ENCODE measurements at regions of chr15 and their contacts with region 1.

Region 1: DNA sequence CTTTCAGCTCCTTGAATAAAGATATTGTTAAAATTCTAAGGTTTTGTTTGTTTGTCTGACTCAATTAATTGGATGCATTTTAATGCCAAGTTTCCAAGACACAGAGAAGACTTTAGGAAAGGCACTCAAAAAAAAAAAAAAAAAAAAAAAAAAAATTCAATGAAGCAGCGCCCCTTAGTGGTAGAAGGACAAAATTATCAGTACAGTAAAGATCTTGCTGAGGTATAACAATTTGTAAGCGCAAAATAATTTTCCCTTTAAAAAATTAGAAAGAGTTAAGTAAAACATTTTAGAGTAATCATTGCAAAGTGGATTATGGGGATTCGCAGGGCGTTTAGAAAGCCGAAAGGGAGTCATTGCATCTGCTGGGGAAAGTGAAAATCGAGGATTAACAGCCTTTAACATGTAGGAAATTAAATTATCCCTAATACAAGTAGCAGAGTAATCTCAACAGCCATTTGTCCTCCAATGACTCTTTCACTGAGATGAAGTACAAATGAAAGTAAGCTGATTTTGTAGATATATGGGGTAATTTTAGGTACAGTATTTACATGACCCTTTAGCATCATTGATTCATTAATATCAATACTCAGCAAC is 5.8 kb upstream of the DIS3L start:
- DNase-seq: peak in 2 of 9 experiments; percentile 48 to 65
- ATAC-seq: peak; percentile 44
- H3K4me3 ChIP-seq: no peak overlapping the region
- H3K4me3 Mint-ChIP-seq: no peak overlapping the region
- H3K27ac ChIP-seq: no peak overlapping the region
- H3K27ac Mint-ChIP-seq: no peak overlapping the region
- H3K4me1 ChIP-seq: peaks cover 19% of the 10 kb centered on the region
- H3K4me1 Mint-ChIP-seq: peaks cover 23% of the 10 kb centered on the region
- H3K27me3 ChIP-seq: no peaks in the 10 kb centered on the region
- H3K27me3 Mint-ChIP-seq: no peaks in the 10 kb centered on the region
- CTCF ChIP-seq: peak; percentile 96

Region 2: GRCh38 chr15:65595960-65596359 is 691.6 kb before region 1 on chr15:
- CTCF ChIA-PET with region 1: interaction called, 5 read pairs
- POLR2A ChIA-PET with region 1: no interaction called
- intact Hi-C with region 1: loop called in 1 of 2 experiments (anchors 5 kb)
- DNase-seq: peak in 4 of 9 experiments; percentile 15 to 56 (median 36)
- ATAC-seq: no peak
- H3K4me3 ChIP-seq: no peak overlapping the region
- H3K4me3 Mint-ChIP-seq: no peak overlapping the region
- H3K27ac ChIP-seq: no peak overlapping the region
- H3K27ac Mint-ChIP-seq: no peak overlapping the region
- H3K4me1 ChIP-seq: no peaks in the 10 kb centered on the region
- H3K4me1 Mint-ChIP-seq: no peaks in the 10 kb centered on the region
- H3K27me3 ChIP-seq: no peaks in the 10 kb centered on the region
- H3K27me3 Mint-ChIP-seq: no peaks in the 10 kb centered on the region
- CTCF ChIP-seq: peak; percentile 36

Region 3: DNA sequence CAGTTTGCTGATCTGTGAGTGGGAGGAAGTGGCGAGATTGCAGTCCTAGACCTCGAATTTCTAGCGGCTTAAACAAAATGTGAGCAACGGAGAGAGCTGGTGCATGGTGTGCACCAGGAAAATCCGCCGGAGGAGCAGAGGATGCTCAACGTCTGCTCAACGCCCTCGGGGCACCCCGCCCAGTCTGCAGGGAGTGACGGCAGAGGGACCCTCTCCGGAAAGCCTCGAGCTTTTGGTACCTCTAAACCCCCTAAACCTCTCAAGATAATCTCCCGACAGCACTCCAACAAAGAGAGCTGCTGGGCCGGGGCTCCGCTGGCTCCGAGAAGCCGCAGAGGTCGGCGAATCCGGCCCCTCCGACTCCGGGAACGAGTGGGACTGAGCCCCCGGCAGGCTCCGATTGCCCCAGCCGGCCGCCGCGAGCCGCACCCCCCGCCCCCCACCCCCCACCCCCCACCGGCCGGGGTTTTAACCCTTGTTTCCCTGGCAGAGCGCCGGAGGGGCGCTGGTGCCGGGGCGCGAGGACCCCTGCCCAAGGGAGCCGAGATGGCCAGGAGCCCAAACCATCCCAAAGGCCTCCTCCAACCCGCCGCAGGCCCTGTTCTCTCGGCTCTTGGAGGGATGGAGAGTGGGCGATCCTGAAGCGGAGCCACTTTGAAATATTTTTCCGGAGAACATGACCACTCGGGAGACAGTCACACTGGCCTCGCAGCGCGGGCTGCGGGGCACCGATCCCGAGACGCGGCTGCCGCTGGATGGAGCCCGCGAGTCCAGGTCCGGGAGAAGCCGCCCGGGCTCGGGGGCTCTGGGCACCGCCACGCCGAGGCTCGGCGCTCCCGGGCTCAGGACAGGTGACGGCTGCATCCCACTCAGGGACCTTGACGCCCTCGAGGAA is 35.5 kb before region 1 on chr15:
- CTCF ChIA-PET with region 1: interaction called, 3 read pairs
- POLR2A ChIA-PET with region 1: interaction called, 3 read pairs
- intact Hi-C with region 1: loop called (anchors 2 kb)
- DNase-seq: peak; percentile 5 to 65 (median 42)
- ATAC-seq: peak; percentile 56
- H3K4me3 ChIP-seq: peak overlapping the region; percentile 48 to 69
- H3K4me3 Mint-ChIP-seq: peak overlapping the region; percentile 75
- H3K27ac ChIP-seq: no peak overlapping the region
- H3K27ac Mint-ChIP-seq: no peak overlapping the region
- H3K4me1 ChIP-seq: peaks cover 18% of the 10 kb centered on the region
- H3K4me1 Mint-ChIP-seq: peaks cover 22% of the 10 kb centered on the region
- H3K27me3 ChIP-seq: peaks cover 27 to 40% of the 10 kb centered on the region in 2 experiments
- H3K27me3 Mint-ChIP-seq: peaks cover 65% of the 10 kb centered on the region
- CTCF ChIP-seq: peak; percentile 41

Region 4: GRCh38 chr15:66707310-66708082 is 419.9 kb after region 1 on chr15:
- CTCF ChIA-PET with region 1: no interaction called
- POLR2A ChIA-PET with region 1: no interaction called
- intact Hi-C with region 1: no loop called
- DNase-seq: no peak
- ATAC-seq: no peak
- H3K4me3 ChIP-seq: no peak overlapping the region
- H3K4me3 Mint-ChIP-seq: no peak overlapping the region
- H3K27ac ChIP-seq: no peak overlapping the region
- H3K27ac Mint-ChIP-seq: no peak overlapping the region
- H3K4me1 ChIP-seq: peaks cover 6% of the 10 kb centered on the region
- H3K4me1 Mint-ChIP-seq: peaks cover 7% of the 10 kb centered on the region
- H3K27me3 ChIP-seq: peaks cover 5 to 12% of the 10 kb centered on the region in 2 experiments
- H3K27me3 Mint-ChIP-seq: peaks cover 9% of the 10 kb centered on the region
- CTCF ChIP-seq: no peak

Measured in CD8-positive, alpha-beta T cell (primary cell).